Adrenal gland (tissue), 19 donors: ENCODE measurements at regions of chr10 and their contacts with region 1.

Region 1: DNA sequence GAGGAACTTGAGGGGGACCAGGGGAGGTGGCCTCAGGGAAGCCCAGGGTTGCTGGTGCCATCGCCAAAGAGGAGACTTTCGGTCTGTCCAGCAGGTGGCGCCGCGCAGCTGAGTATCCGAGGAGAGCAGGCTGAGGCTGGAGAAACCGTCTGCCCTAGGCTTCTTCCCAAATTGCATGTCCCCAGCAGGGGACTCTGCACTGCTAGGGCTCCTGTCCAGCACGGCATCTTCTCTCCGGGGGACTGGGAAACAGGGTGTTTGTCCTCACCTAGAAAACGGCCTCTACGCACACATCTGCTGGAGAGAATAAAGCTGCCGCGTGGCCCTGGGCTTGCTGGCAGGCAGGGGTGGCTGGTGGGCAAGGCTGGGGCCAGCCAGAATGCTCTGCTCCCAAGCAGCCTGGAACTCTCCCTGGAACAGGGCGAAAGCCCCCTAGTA is 161.9 kb downstream of the SH2D4B start:
- DNase-seq: peak; percentile 67 to 88 (median 81)
- H3K4me3 ChIP-seq: no peak overlapping the region
- H3K27ac ChIP-seq: no peak overlapping the region
- H3K4me1 ChIP-seq: no peaks in the 10 kb centered on the region
- H3K27me3 ChIP-seq: no peaks in the 10 kb centered on the region
- CTCF ChIP-seq: peak; percentile 57 to 80 (median 71)
- POLR2A ChIP-seq: no peak

Region 2: DNA sequence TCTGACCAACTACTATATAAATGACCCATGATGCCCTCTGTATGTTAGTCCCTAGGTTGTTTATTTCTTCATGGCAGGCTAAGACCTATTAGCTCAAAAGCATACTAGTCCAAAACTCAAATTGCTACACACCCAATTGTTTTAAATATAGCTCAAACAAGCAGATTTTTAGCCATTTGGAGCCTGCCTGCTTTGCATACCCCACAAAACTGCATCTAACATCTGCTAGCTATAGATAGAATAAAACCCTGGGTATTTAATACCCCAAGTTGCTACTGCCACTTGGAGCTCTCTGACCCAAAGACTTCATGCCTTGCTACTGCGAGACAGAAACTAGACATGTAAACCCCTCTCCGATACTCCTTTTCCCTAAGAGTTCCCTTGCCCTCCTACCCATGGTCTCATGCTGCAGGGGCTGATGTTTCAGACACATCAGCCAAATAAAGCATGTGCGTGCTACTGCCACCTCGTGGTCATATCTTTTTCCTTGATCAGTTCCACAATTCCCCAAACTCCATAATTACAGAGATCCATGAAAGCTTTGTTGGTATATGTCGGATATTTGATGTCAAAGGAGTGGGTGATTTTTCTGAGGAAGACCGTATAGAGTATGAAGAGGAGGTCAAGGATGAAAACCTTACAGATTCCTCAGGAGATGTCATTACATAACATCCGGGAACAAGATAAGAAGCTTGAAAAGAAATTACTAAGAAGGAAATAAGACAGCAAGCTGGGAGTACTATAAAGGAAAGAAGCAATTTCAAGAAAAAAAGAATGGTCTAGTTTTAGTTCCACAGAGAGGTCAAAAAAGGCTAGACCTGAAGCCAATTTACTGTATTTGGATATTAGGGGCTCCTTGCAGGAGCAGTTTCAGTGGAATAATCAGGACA is 224.7 kb after region 1 on chr10:
- intact Hi-C with region 1: loop called in 1 of 2 experiments (anchors 10 kb)
- DNase-seq: peak; percentile 29 to 78 (median 47)
- H3K4me3 ChIP-seq: no peak overlapping the region
- H3K27ac ChIP-seq: no peak overlapping the region
- H3K4me1 ChIP-seq: no peaks in the 10 kb centered on the region
- H3K27me3 ChIP-seq: no peaks in the 10 kb centered on the region
- CTCF ChIP-seq: peak; percentile 36 to 71 (median 60)
- POLR2A ChIP-seq: no peak

Region 3: GRCh38 chr10:81021428-81022129 is 322.0 kb after region 1 on chr10:
- intact Hi-C with region 1: loop called in 1 of 2 experiments (anchors 10 kb)
- DNase-seq: no peak
- H3K4me3 ChIP-seq: no peak overlapping the region
- H3K27ac ChIP-seq: no peak overlapping the region
- H3K4me1 ChIP-seq: peaks cover 0 to 4% of the 10 kb centered on the region in 2 donors
- H3K27me3 ChIP-seq: no peaks in the 10 kb centered on the region
- CTCF ChIP-seq: no peak
- POLR2A ChIP-seq: no peak